ENCODE measurements at regions of chr1 and their contacts with region 1.

Region 1: GRCh38 chr1:37859507-37860345 is at the start of gene MTF1:
- DNase-seq: peak; percentile 98
- H3K4me3 ChIP-seq: peak within 1 kb of the TSS; percentile 91 to 95
- H3K27ac ChIP-seq: peak within 1 kb of the TSS; percentile 88 to 92
- H3K4me1 ChIP-seq: peaks cover 9 to 10% of the 10 kb centered on the region in 2 experiments; a peak in 3 of 4 replicates
- H3K27me3 ChIP-seq: no peaks in the 10 kb centered on the region
- CTCF ChIP-seq: peak; percentile 90
- EP300 ChIP-seq: no peak
- RAD21 ChIP-seq: peak; percentile 68
- polyA plus RNA-seq, gene MTF1: 5.0 and 7.4 TPM in 2 replicates

Region 2: GRCh38 chr1:37622131-37622530 is 237.6 kb before region 1 on chr1:
- CTCF ChIA-PET with region 1: no interaction called
- POLR2A ChIA-PET with region 1: no interaction called
- DNase-seq: no peak
- H3K4me3 ChIP-seq: no peak overlapping the region
- H3K27ac ChIP-seq: no peak overlapping the region
- H3K4me1 ChIP-seq: no peaks in the 10 kb centered on the region
- H3K27me3 ChIP-seq: peaks cover 31% of the 10 kb centered on the region; the same call in 1 of the 2 replicates
- CTCF ChIP-seq: no peak
- EP300 ChIP-seq: no peak
- RAD21 ChIP-seq: no peak

Region 3: DNA sequence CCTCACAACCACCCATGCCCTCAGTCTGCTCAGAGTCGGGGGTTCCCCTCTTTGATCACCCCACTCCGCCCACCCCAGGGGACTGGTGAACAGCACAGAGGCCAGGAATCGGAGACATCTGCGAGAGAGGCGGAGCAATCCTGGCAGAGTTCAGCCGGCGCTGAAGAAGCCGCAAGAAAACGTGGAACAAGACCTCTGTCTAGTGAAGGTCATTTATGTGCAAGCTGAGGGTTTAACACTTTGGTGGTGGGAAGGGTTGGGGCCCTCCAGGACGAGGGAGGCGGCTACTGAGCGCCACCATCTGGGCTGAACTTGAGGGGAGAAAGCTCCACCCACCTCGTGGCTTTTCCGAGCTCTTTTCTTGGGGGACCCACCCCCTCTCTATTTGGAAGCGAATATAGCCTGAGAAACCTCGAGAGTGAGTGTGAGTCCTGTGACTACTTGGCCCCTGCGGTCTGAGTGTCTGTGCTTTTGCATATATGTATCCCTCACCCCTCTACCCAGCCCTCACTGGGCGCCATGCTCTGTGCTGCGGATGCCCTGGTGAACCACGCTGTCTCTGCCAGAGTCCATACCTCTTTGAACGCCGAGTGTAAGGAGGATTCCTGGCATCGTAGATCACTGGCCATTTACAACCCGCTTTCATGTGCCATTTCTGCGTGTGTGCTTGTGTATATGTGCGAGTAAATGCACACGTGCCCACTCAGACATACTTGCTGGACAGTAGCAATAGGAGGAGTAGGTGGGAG is 93.6 kb before region 1 on chr1:
- CTCF ChIA-PET with region 1: interaction called, 11 read pairs
- POLR2A ChIA-PET with region 1: no interaction called
- DNase-seq: peak; percentile 67
- H3K4me3 ChIP-seq: peak overlapping the region in 1 of 2 experiments; percentile 42; a peak in 2 of 4 replicates
- H3K27ac ChIP-seq: no peak overlapping the region
- H3K4me1 ChIP-seq: peaks cover 0 to 13% of the 10 kb centered on the region in 2 experiments; a peak in 1 of 4 replicates
- H3K27me3 ChIP-seq: peaks cover 40% of the 10 kb centered on the region
- CTCF ChIP-seq: 0 out of 2 replicates have a peak, but pooled peaks have one; percentile 9
- EP300 ChIP-seq: no peak
- RAD21 ChIP-seq: peak; percentile 58

Region 4: GRCh38 chr1:37807555-37808368 is 52.0 kb before region 1 on chr1 and contains the starts of genes C1orf122 and YRDC:
- CTCF ChIA-PET with region 1: interaction called, 20 read pairs
- POLR2A ChIA-PET with region 1: interaction called, 29 read pairs
- DNase-seq: peak; percentile 98
- H3K4me3 ChIP-seq: peak within 1 kb of the TSS; percentile 91
- H3K27ac ChIP-seq: peak within 1 kb of the TSS; percentile 82 to 91
- H3K4me1 ChIP-seq: peaks cover 15 to 29% of the 10 kb centered on the region in 2 experiments
- H3K27me3 ChIP-seq: no peaks in the 10 kb centered on the region
- CTCF ChIP-seq: no peak
- EP300 ChIP-seq: no peak
- RAD21 ChIP-seq: no peak
- polyA plus RNA-seq, gene C1orf122: 63.2 and 75.3 TPM in 2 replicates
- polyA plus RNA-seq, gene YRDC: 34.2 and 46.1 TPM in 2 replicates

Region 5: DNA sequence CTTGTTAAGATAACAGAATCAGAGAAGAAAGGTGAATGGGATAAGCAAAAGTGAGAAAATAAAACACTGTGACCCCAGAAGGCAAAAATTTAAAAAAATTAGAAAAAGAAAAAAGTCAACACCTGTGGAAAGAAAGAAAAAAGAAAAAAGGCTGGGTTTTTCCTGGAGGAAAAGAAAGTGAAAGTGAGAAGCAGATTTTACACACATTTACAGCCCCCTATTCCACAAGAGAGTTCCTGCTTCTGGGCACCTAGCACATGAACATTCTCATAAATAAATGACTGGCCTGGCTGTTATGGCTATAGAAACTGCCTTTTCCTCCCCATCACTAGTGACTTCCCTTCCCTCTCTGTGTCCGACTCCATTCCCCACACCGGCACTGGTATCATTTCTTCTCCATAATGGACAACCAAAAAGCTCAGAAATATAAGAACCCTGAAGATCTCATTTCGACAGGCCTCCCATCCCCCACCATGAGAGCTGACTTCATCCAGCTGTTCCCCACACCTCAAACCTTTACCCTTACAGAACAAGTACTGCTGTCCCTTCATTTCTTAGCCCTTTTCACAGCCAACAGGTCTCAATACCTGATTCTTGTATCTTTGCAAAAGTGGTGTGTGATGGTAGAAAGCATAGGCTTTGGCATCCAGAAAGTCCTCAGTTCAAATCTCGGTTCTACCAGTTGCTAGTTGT is 12.9 kb before region 1 on chr1:
- CTCF ChIA-PET with region 1: interaction called, 26 read pairs
- POLR2A ChIA-PET with region 1: interaction called, 5 read pairs
- DNase-seq: no peak
- H3K4me3 ChIP-seq: no peak overlapping the region
- H3K27ac ChIP-seq: no peak overlapping the region
- H3K4me1 ChIP-seq: peaks cover 0 to 5% of the 10 kb centered on the region in 2 experiments; a peak in 2 of 4 replicates
- H3K27me3 ChIP-seq: no peaks in the 10 kb centered on the region
- CTCF ChIP-seq: no peak
- EP300 ChIP-seq: no peak
- RAD21 ChIP-seq: no peak

Region 6: GRCh38 chr1:37875834-37876233 is 16.1 kb after region 1 on chr1:
- CTCF ChIA-PET with region 1: interaction called, 17 read pairs
- POLR2A ChIA-PET with region 1: no interaction called
- DNase-seq: no peak
- H3K4me3 ChIP-seq: no peak overlapping the region
- H3K27ac ChIP-seq: no peak overlapping the region
- H3K4me1 ChIP-seq: no peaks in the 10 kb centered on the region
- H3K27me3 ChIP-seq: no peaks in the 10 kb centered on the region
- CTCF ChIP-seq: peak; percentile 39
- EP300 ChIP-seq: no peak
- RAD21 ChIP-seq: no peak

Measured in SK-N-SH (cell line).